ENCODE measurements at regions of chr17 and their contacts with region 1.

Region 1: GRCh38 chr17:5237541-5238016 is 2.9 kb upstream of the SCIMP start:
- DNase-seq: peak; percentile 66
- H3K4me3 Mint-ChIP-seq: no peak overlapping the region
- H3K27ac Mint-ChIP-seq: peak overlapping the region; percentile 5
- H3K4me1 Mint-ChIP-seq: peaks cover 18% of the 10 kb centered on the region
- H3K27me3 Mint-ChIP-seq: no peaks in the 10 kb centered on the region

Region 2: DNA sequence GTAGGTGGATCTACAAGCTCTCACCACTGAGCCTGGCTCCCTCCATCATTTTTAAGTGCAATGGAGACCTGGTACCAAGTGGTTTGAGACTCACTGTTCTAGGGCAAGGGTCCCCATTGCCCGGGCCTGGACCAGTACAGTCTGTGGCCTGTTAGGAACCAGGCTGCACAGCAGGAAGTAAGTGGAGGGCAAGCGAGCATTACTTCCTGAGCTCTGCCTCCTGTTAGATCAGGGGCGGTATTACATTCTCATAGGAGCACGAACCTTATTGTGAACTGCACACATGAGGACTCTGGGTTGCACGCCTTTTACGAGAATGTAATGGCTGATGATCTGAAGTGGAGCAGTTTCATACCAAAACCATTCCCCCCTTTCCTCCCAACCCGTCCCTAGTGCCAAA is 39.1 kb before region 1 on chr17:
- CTCF ChIA-PET with region 1: interaction called, 10 read pairs
- POLR2A ChIA-PET with region 1: no interaction called
- intact Hi-C with region 1: loop called (anchors 1 kb)
- DNase-seq: no peak
- H3K4me3 Mint-ChIP-seq: no peak overlapping the region
- H3K27ac Mint-ChIP-seq: no peak overlapping the region
- H3K4me1 Mint-ChIP-seq: no peaks in the 10 kb centered on the region
- H3K27me3 Mint-ChIP-seq: no peaks in the 10 kb centered on the region

Region 3: GRCh38 chr17:5297245-5297644 is 59.7 kb after region 1 on chr17:
- CTCF ChIA-PET with region 1: no interaction called
- POLR2A ChIA-PET with region 1: no interaction called
- intact Hi-C with region 1: no loop called
- DNase-seq: no peak
- H3K4me3 Mint-ChIP-seq: no peak overlapping the region
- H3K27ac Mint-ChIP-seq: no peak overlapping the region
- H3K4me1 Mint-ChIP-seq: peaks cover 31% of the 10 kb centered on the region
- H3K27me3 Mint-ChIP-seq: no peaks in the 10 kb centered on the region

Region 4: GRCh38 chr17:5438716-5439445 is 201.3 kb after region 1 on chr17 and contains the start of gene C1QBP:
- CTCF ChIA-PET with region 1: no interaction called
- POLR2A ChIA-PET with region 1: no interaction called
- intact Hi-C with region 1: no loop called
- DNase-seq: peak; percentile 95
- H3K4me3 Mint-ChIP-seq: peak within 1 kb of the TSS; percentile 82
- H3K27ac Mint-ChIP-seq: peak within 1 kb of the TSS; percentile 83
- H3K4me1 Mint-ChIP-seq: peaks cover 43% of the 10 kb centered on the region
- H3K27me3 Mint-ChIP-seq: no peaks in the 10 kb centered on the region
- total RNA-seq, gene C1QBP: 342 TPM

Measured in activated CD4-positive, alpha-beta memory T cell treated with anti-CD3 and anti-CD28 coated beads for 36 hours (primary cell).